ENCODE measurements at regions of chr4 and their contacts with region 1.

Region 1: GRCh38 chr4:121726642-121727268 is 30.0 kb upstream of the ANXA5 start:
- DNase-seq: no peak
- ATAC-seq: peak; percentile 64
- H3K4me3 Mint-ChIP-seq: no peak overlapping the region
- H3K27ac Mint-ChIP-seq: no peak overlapping the region
- H3K4me1 Mint-ChIP-seq: no peaks in the 10 kb centered on the region
- H3K27me3 Mint-ChIP-seq: peaks cover 13% of the 10 kb centered on the region
- CTCF ChIP-seq: no peak

Region 2: GRCh38 chr4:120156120-120156718 is 1570.5 kb before region 1 on chr4:
- CTCF ChIA-PET with region 1: no interaction called
- POLR2A ChIA-PET with region 1: no interaction called
- intact Hi-C with region 1: loop called (anchors 2 kb)
- DNase-seq: no peak
- ATAC-seq: no peak
- H3K4me3 Mint-ChIP-seq: no peak overlapping the region
- H3K27ac Mint-ChIP-seq: no peak overlapping the region
- H3K4me1 Mint-ChIP-seq: no peaks in the 10 kb centered on the region
- H3K27me3 Mint-ChIP-seq: peaks cover 2% of the 10 kb centered on the region
- CTCF ChIP-seq: peak; percentile 68

Region 3: GRCh38 chr4:121370729-121371325 is 355.9 kb before region 1 on chr4:
- CTCF ChIA-PET with region 1: interaction called, 10 read pairs
- POLR2A ChIA-PET with region 1: no interaction called
- intact Hi-C with region 1: loop called (anchors 1 kb)
- DNase-seq: no peak
- ATAC-seq: no peak
- H3K4me3 Mint-ChIP-seq: no peak overlapping the region
- H3K27ac Mint-ChIP-seq: no peak overlapping the region
- H3K4me1 Mint-ChIP-seq: no peaks in the 10 kb centered on the region
- H3K27me3 Mint-ChIP-seq: no peaks in the 10 kb centered on the region
- CTCF ChIP-seq: no peak

Region 4: GRCh38 chr4:121411151-121411744 is 315.5 kb before region 1 on chr4:
- CTCF ChIA-PET with region 1: no interaction called
- POLR2A ChIA-PET with region 1: no interaction called
- intact Hi-C with region 1: no loop called
- DNase-seq: no peak
- ATAC-seq: no peak
- H3K4me3 Mint-ChIP-seq: no peak overlapping the region
- H3K27ac Mint-ChIP-seq: no peak overlapping the region
- H3K4me1 Mint-ChIP-seq: no peaks in the 10 kb centered on the region
- H3K27me3 Mint-ChIP-seq: no peaks in the 10 kb centered on the region
- CTCF ChIP-seq: no peak

Region 5: GRCh38 chr4:121484633-121485032 is 242.1 kb before region 1 on chr4:
- CTCF ChIA-PET with region 1: interaction called, 3 read pairs
- POLR2A ChIA-PET with region 1: no interaction called
- intact Hi-C with region 1: loop called (anchors 1 kb)
- DNase-seq: no peak
- ATAC-seq: peak; percentile 54
- H3K4me3 Mint-ChIP-seq: no peak overlapping the region
- H3K27ac Mint-ChIP-seq: no peak overlapping the region
- H3K4me1 Mint-ChIP-seq: no peaks in the 10 kb centered on the region
- H3K27me3 Mint-ChIP-seq: peaks cover 2% of the 10 kb centered on the region
- CTCF ChIP-seq: no peak

Region 6: DNA sequence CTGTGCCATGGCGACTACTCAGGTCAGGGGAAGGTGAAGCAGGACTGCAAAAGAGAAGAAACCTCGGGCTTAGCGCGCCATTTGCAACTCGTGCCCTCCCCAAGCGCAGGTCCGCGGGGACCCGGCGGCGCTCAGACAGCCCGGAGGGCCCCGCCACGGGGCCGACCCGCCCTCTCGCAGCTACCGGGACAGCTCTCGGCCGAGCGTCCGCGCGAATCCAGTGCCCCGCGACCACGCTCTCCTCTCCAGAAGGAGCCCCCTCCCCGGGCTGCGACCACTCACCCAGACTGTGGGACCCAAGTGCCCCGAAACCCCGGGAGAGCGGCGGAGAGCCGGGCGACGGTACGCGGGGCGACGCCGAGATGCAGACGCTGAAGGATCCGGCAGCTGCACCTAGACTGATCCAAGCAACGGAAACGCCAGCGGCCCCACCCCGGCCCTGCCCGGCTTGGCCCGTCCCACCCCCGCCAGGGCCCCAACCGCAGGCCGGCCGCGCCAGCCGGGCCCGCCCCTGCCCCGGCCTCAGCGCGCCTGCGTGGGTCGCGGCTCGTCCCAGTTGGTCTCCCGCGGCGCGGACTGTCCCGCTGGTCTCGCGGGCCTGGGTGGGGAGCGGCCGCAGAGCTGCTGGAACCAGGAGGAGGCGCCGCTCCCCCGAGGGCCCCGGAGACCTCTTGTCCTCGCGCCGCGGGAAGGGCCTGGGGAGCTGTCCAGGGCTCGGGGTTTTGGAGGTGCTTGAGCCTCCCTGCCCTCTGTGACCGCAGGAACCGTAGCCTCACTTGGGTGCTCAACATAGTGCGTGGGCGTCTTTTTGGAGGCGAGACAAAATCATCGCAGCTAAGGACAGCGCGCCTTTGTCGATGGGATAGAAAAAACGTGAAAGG is 29.9 kb before region 1 on chr4 and contains the start of gene ANXA5:
- CTCF ChIA-PET with region 1: no interaction called
- POLR2A ChIA-PET with region 1: no interaction called
- intact Hi-C with region 1: loop called (anchors 1 kb)
- DNase-seq: peak; percentile 76
- ATAC-seq: peak; percentile 92
- H3K4me3 Mint-ChIP-seq: peak within 1 kb of the TSS; percentile 94
- H3K27ac Mint-ChIP-seq: peak within 1 kb of the TSS; percentile 90
- H3K4me1 Mint-ChIP-seq: peaks cover 34% of the 10 kb centered on the region
- H3K27me3 Mint-ChIP-seq: no peaks in the 10 kb centered on the region
- CTCF ChIP-seq: no peak
- total RNA-seq, gene ANXA5: 86.8 and 89.9 TPM in 2 replicates

Region 7: DNA sequence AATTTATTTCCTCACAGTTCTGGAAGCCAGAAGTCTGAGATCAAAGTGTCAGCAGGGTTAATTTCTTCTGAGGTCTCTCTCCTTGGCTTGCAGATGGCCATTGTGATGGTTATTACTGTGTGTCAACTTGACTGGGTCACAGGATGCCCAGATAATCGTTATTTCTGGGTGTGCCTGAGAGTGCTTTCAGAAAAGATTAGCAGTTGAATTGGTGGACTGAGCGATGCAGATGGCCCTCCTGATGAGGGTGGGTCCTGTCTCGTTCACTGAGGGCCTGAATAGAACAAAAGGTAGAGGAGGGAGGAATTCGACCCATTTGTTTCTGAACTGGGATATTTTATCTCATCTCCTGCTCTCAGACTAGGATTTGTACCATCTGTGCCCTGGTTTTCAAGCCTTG is 22.5 kb after region 1 on chr4:
- CTCF ChIA-PET with region 1: no interaction called
- POLR2A ChIA-PET with region 1: no interaction called
- intact Hi-C with region 1: no loop called
- DNase-seq: no peak
- ATAC-seq: no peak
- H3K4me3 Mint-ChIP-seq: no peak overlapping the region
- H3K27ac Mint-ChIP-seq: no peak overlapping the region
- H3K4me1 Mint-ChIP-seq: no peaks in the 10 kb centered on the region
- H3K27me3 Mint-ChIP-seq: peaks cover 21% of the 10 kb centered on the region
- CTCF ChIP-seq: no peak

Region 8: GRCh38 chr4:122205690-122206089 is 478.9 kb after region 1 on chr4:
- CTCF ChIA-PET with region 1: no interaction called
- POLR2A ChIA-PET with region 1: no interaction called
- intact Hi-C with region 1: no loop called
- DNase-seq: no peak
- ATAC-seq: no peak
- H3K4me3 Mint-ChIP-seq: no peak overlapping the region
- H3K27ac Mint-ChIP-seq: no peak overlapping the region
- H3K4me1 Mint-ChIP-seq: no peaks in the 10 kb centered on the region
- H3K27me3 Mint-ChIP-seq: no peaks in the 10 kb centered on the region
- CTCF ChIP-seq: no peak